Right ventricle myocardium superior (tissue), 1 donor: ENCODE measurements at regions of chr15 and their contacts with region 1.

Region 1: DNA sequence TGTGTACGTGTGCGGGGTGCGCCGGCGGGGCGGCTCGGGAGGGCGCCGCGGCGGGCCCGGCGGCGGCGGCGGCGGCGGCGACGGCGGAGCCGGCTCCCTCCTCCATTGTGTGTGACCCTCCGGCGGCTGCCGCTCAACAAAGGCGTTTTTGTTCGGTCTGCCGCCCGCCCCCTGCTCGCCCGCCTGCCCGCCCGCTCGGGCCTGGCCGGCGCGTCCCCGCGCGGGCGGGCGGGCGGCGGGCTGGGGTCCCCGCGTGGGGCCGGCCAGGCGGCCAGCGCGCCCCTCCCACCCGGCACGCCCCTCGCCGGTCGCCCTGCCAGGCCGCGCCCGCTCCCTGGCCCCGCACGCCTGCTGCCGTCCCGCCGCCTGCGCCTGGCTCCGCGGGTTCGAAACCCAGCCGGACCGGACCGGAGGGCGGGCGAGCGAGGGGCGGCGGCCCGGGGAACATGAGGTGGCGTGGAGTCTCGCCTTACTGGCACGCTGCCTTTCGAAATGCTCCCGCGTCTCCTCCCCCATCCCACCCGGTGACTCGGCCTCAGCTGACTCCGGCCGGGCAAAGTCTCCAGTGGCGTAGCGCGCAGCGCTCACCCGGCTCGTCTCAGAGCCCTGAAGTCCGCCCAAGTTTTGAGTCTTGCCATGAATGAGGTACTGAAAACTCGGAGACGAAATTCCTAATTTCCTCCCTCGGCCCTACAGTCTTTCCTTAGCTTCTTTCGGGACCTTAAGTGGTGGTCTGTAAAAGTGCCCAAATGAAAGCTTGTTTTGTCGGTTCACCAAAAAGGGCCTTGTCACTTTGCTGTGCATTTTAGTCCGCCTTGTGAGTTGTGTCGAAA is 585 bp downstream of the MAPK6 start:
- DNase-seq: peak; percentile 90
- ATAC-seq: peak; percentile 77

Region 2: DNA sequence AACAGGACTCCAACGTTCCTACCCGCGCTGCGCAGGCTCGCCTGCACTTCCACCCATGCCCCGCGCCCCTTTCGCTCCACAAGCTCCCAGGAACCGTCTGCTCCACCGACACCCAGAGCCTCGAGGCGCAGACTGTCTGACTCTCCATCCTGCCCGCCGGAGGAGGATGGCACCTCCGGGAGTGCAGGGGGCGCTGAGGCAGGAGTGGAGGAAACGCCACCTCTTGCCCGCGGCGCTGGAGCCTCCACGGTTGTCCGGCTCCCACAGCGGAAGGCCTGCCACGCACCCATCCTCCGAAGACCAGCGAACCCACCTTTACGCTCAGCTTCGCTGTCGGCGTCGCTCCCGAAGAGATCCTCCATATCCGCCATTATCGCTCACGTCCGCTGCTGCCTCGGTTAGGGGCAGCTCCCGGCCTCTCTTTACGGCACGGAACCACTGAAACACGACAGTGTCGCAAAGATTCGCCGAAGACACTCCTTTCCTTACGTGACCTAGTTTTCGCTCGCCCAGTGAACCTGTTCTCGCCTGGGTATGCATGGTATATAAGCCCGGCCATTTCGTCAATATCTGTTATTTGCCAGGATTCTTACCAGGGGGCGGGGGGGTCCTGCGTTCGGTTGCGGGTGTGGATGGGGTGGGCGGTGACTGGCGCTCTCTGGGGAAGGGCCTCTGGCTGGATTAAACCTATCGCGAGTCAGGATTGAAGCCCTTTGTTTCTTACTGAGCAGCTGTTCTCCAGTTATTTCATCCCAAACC is 48.0 kb before region 1 on chr15 and contains the start of gene LEO1:
- intact Hi-C with region 1: loop called (anchors 5 kb)
- DNase-seq: peak; percentile 90
- ATAC-seq: peak; percentile 99
- total RNA-seq, gene LEO1: 7.8 TPM